H1 (cell line): ENCODE measurements at regions of chr6 and their contacts with region 1.

Region 1: GRCh38 chr6:131084982-131085381 is 21.9 kb upstream of the EPB41L2 start:
- DNase-seq: no peak
- H3K4me3 ChIP-seq: no peak overlapping the region
- H3K27ac ChIP-seq: no peak overlapping the region
- H3K4me1 ChIP-seq: no peaks in the 10 kb centered on the region; a peak in 1 of 7 replicates
- H3K27me3 ChIP-seq: no peaks in the 10 kb centered on the region
- CTCF ChIP-seq: peak; percentile 33 to 39 (median 39); a peak in 3 of 4 replicates
- EP300 ChIP-seq: no peak
- POLR2A ChIP-seq: no peak
- RAD21 ChIP-seq: peak in 1 of 2 experiments; percentile 34; a peak in 1 of 4 replicates

Region 2: DNA sequence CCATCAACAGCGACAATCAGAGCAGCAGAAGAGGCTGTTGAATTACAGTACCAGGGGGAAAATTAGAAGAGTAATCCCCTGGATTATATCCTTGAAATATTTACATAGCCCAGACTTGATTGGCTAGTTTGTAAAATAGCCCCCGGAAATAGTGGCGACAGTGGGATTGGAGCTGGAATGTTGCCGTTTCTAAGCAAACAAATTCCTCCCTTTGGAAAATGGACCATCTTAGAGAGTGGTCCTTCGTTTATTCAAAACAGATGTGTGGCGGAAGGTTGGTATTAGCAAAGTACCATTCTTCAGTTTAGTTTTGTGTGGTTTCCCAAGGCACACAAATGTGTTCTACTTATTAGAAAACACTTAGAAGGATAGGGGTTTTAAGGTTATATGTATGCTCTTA is 17.5 kb before region 1 on chr6:
- CTCF ChIA-PET with region 1: interaction called, 16 read pairs
- POLR2A ChIA-PET with region 1: no interaction called
- DNase-seq: no peak
- H3K4me3 ChIP-seq: no peak overlapping the region
- H3K27ac ChIP-seq: no peak overlapping the region
- H3K4me1 ChIP-seq: peaks cover 0 to 5% (median 2%) of the 10 kb centered on the region in 4 experiments; a peak in 3 of 7 replicates
- H3K27me3 ChIP-seq: no peaks in the 10 kb centered on the region
- CTCF ChIP-seq: no peak
- EP300 ChIP-seq: no peak
- POLR2A ChIP-seq: no peak
- RAD21 ChIP-seq: no peak

Region 3: GRCh38 chr6:131073577-131073976 is 11.4 kb before region 1 on chr6:
- CTCF ChIA-PET with region 1: interaction called, 16 read pairs
- POLR2A ChIA-PET with region 1: no interaction called
- DNase-seq: no peak
- H3K4me3 ChIP-seq: no peak overlapping the region
- H3K27ac ChIP-seq: no peak overlapping the region
- H3K4me1 ChIP-seq: no peaks in the 10 kb centered on the region
- H3K27me3 ChIP-seq: no peaks in the 10 kb centered on the region
- CTCF ChIP-seq: no peak
- EP300 ChIP-seq: no peak
- POLR2A ChIP-seq: no peak
- RAD21 ChIP-seq: no peak

Region 4: GRCh38 chr6:131258816-131259476 is 174.0 kb after region 1 on chr6:
- CTCF ChIA-PET with region 1: no interaction called
- POLR2A ChIA-PET with region 1: no interaction called
- DNase-seq: no peak
- H3K4me3 ChIP-seq: no peak overlapping the region
- H3K27ac ChIP-seq: no peak overlapping the region
- H3K4me1 ChIP-seq: peaks cover 0 to 4% (median 1%) of the 10 kb centered on the region in 4 experiments; a peak in 2 of 7 replicates
- H3K27me3 ChIP-seq: no peaks in the 10 kb centered on the region
- CTCF ChIP-seq: no peak
- EP300 ChIP-seq: no peak
- POLR2A ChIP-seq: no peak
- RAD21 ChIP-seq: no peak